Naive thymus-derived CD4-positive, alpha-beta T cell (primary cell): ENCODE measurements at regions of chr4 and their contacts with region 1.

Region 1: DNA sequence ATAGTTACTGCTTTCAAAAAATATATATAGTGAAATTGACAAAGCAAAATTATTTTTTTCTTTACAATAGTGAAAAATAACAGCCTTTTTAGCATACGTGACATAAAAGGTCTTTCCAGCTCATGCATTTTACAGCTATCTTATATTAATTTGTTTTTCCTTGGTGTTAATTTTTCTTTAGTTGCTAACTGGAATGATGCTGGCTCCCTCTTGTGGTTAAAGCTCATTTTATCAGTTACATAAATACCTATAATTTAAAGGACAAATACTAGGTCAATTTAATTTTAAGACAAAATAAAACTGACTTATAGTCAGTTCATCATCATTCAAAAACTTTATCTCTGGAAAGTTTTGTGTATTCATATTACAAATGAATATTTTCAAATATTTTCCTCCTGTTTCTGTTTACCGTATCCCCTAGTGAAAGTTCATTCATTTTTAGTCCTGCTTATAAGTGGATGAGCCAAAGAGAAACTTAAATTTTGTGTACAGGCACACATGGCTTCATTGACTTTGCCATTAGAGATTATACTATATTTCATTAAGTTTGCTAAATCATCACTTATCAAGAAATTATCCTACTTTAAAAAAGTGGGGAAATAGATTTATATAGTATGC is 9.9 kb upstream of the ANAPC4 start:
- DNase-seq: peak in 5 of 9 donors; percentile 18 to 37 (median 26)
- ATAC-seq: no peak
- H3K4me3 ChIP-seq: no peak overlapping the region
- H3K4me3 Mint-ChIP-seq: no peak overlapping the region
- H3K27ac ChIP-seq: no peak overlapping the region
- H3K27ac Mint-ChIP-seq: no peak overlapping the region
- H3K4me1 ChIP-seq: no peaks in the 10 kb centered on the region
- H3K4me1 Mint-ChIP-seq: no peaks in the 10 kb centered on the region
- H3K27me3 ChIP-seq: no peaks in the 10 kb centered on the region
- H3K27me3 Mint-ChIP-seq: no peaks in the 10 kb centered on the region

Region 2: DNA sequence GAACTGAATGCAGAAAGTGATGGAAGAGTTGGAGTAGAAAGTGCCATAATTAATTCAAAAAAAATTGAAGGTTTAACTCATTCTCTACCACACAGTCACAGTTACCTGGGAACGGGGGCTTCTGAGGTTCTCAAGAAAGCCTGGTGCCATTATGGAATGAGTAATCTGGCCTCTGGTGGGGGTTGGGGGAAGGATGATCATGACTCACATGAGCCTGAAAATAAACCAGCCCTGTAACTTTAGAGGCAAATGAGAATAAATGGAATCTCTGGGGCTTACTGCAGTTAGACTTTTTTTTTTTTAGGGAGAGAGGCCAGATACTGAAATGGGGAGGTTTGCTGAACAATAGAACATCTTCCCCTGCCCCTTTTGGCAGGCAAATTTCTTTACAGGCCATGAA is 516.4 kb before region 1 on chr4:
- CTCF ChIA-PET with region 1: no interaction called
- POLR2A ChIA-PET with region 1: no interaction called
- intact Hi-C with region 1: no loop called
- DNase-seq: no peak
- ATAC-seq: no peak
- H3K4me3 ChIP-seq: no peak overlapping the region
- H3K4me3 Mint-ChIP-seq: no peak overlapping the region
- H3K27ac ChIP-seq: no peak overlapping the region
- H3K27ac Mint-ChIP-seq: no peak overlapping the region
- H3K4me1 ChIP-seq: no peaks in the 10 kb centered on the region
- H3K4me1 Mint-ChIP-seq: no peaks in the 10 kb centered on the region
- H3K27me3 ChIP-seq: no peaks in the 10 kb centered on the region
- H3K27me3 Mint-ChIP-seq: peaks cover 0 to 9% (median 4%) of the 10 kb centered on the region in 5 donors

Region 3: DNA sequence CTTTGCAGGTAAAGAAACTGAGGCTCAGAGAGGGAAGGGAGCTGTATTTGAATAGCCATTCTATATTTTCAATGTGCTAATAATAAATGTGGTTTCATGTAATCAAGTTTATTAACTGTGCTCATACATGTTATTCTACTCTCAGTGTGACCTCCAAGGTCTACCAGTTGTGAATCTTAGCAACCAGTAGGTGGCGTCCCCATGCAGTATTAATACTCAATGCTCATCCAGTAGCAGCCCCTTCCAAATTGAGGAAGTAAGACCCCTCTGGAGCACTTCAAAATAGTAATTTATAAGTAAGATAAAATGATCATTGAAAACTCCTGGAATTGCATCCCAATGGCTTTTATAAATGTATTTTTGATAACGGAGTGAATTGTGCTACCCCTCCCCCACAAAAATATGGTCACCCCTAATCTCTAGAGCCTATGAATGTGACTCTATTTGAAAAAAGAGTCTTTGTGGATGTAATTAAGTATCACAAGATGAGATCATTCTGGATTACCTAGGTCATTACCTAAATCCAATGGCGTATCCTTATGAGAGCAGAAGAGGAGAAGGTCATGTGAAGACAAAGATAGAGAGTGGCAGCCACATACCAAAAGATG is 186.5 kb before region 1 on chr4:
- CTCF ChIA-PET with region 1: no interaction called
- POLR2A ChIA-PET with region 1: no interaction called
- intact Hi-C with region 1: loop called (anchors 1 kb)
- DNase-seq: peak in 5 of 9 donors; percentile 14 to 39 (median 26)
- ATAC-seq: peak; percentile 80
- H3K4me3 ChIP-seq: no peak overlapping the region
- H3K4me3 Mint-ChIP-seq: no peak overlapping the region
- H3K27ac ChIP-seq: no peak overlapping the region
- H3K27ac Mint-ChIP-seq: no peak overlapping the region
- H3K4me1 ChIP-seq: peaks cover 4 to 16% of the 10 kb centered on the region in 2 donors
- H3K4me1 Mint-ChIP-seq: peaks cover 22 to 63% (median 47%) of the 10 kb centered on the region in 7 donors
- H3K27me3 ChIP-seq: no peaks in the 10 kb centered on the region
- H3K27me3 Mint-ChIP-seq: no peaks in the 10 kb centered on the region

Region 4: DNA sequence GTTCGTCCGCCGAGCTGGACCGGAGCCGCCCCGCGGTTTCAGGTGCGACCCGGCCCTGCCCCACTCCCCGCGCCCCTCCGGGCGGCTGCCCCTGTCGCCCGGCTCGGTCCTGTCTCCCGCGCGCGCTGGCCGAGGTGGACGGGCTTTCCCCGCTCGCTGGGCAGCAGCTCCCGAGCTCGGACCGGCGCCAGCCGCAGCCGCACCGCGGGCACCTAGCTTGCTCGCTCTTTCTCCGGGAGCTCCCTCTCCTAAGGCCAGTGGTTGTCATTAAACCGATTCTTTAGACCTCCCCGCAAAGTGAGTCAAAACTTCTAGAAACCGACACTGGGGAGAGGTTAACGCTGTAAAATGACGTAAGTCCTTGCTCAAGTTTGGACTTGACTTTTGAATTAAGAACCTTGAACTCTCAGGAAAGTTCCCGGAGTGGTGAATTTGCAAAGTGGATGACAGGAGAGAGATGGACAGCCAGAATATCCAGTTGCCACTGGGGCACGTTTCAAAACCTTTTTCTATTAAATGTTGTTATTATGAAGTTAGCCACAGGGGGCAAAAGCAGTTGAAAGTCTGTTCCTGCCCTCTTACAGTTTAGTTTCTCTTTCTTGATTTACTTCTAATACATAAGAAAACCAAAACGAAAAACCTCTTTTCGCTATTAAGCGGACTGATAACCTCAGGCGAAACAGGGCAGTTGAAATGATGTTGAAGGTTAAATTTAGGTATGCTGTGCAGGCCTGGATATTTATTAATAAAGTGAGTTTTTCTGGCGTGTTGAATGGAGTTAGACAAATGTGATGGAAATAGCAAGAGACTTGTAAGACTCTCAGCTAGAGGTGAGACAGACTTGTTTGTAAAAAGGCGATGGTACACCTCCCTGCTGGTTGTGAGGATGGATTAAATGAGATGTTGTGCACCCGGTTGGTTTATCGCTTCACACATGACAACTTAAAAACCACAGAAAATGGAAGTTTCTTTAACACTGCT is 132.4 kb before region 1 on chr4:
- CTCF ChIA-PET with region 1: no interaction called
- POLR2A ChIA-PET with region 1: no interaction called
- intact Hi-C with region 1: no loop called
- DNase-seq: peak; percentile 20 to 76 (median 64)
- ATAC-seq: peak; percentile 70
- H3K4me3 ChIP-seq: peak overlapping the region; percentile 80
- H3K4me3 Mint-ChIP-seq: peak overlapping the region; percentile 86 to 99 (median 94)
- H3K27ac ChIP-seq: peak overlapping the region; percentile 89
- H3K27ac Mint-ChIP-seq: peak overlapping the region; percentile 89 to 98 (median 95)
- H3K4me1 ChIP-seq: peaks cover 16 to 29% of the 10 kb centered on the region in 2 donors
- H3K4me1 Mint-ChIP-seq: peaks cover 16 to 57% (median 44%) of the 10 kb centered on the region in 7 donors
- H3K27me3 ChIP-seq: no peaks in the 10 kb centered on the region
- H3K27me3 Mint-ChIP-seq: no peaks in the 10 kb centered on the region

Region 5: GRCh38 chr4:25330905-25331808 is 36.0 kb before region 1 on chr4:
- CTCF ChIA-PET with region 1: no interaction called
- POLR2A ChIA-PET with region 1: no interaction called
- intact Hi-C with region 1: loop called in 1 of 2 experiments (anchors 5 kb)
- DNase-seq: no peak
- ATAC-seq: peak; percentile 54
- H3K4me3 ChIP-seq: peak overlapping the region; percentile 57
- H3K4me3 Mint-ChIP-seq: peak overlapping the region; percentile 59 to 86 (median 76)
- H3K27ac ChIP-seq: peak overlapping the region; percentile 42
- H3K27ac Mint-ChIP-seq: peak overlapping the region; percentile 70 to 95 (median 85)
- H3K4me1 ChIP-seq: peaks cover 0 to 7% of the 10 kb centered on the region in 2 donors
- H3K4me1 Mint-ChIP-seq: peaks cover 7 to 31% (median 23%) of the 10 kb centered on the region in 7 donors
- H3K27me3 ChIP-seq: no peaks in the 10 kb centered on the region
- H3K27me3 Mint-ChIP-seq: no peaks in the 10 kb centered on the region

Region 6: DNA sequence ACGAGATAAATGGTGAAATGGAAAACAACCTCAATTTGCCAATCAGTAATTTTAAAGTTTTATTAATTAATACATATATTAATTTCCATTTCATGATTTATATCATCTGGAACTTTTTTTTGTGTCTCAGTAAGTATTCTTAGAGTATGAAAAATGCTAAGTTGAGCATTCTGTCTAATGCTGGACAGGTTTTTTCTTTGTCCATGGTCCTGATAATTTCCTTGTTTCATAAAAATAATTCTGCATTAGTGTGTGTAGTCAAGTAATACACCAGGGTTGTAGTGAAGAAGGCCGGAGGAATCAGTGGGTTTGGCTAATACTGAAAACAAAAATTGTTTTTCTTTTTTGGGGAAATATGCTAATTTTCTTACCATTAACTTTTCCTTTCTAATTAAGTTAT is 19.8 kb after region 1 on chr4:
- CTCF ChIA-PET with region 1: no interaction called
- POLR2A ChIA-PET with region 1: no interaction called
- intact Hi-C with region 1: loop called in 1 of 2 experiments (anchors 1 kb)
- DNase-seq: no peak
- ATAC-seq: no peak
- H3K4me3 ChIP-seq: no peak overlapping the region
- H3K4me3 Mint-ChIP-seq: no peak overlapping the region
- H3K27ac ChIP-seq: no peak overlapping the region
- H3K27ac Mint-ChIP-seq: no peak overlapping the region
- H3K4me1 ChIP-seq: no peaks in the 10 kb centered on the region
- H3K4me1 Mint-ChIP-seq: peaks cover 0 to 12% (median 0%) of the 10 kb centered on the region in 7 donors
- H3K27me3 ChIP-seq: no peaks in the 10 kb centered on the region
- H3K27me3 Mint-ChIP-seq: no peaks in the 10 kb centered on the region

Region 7: DNA sequence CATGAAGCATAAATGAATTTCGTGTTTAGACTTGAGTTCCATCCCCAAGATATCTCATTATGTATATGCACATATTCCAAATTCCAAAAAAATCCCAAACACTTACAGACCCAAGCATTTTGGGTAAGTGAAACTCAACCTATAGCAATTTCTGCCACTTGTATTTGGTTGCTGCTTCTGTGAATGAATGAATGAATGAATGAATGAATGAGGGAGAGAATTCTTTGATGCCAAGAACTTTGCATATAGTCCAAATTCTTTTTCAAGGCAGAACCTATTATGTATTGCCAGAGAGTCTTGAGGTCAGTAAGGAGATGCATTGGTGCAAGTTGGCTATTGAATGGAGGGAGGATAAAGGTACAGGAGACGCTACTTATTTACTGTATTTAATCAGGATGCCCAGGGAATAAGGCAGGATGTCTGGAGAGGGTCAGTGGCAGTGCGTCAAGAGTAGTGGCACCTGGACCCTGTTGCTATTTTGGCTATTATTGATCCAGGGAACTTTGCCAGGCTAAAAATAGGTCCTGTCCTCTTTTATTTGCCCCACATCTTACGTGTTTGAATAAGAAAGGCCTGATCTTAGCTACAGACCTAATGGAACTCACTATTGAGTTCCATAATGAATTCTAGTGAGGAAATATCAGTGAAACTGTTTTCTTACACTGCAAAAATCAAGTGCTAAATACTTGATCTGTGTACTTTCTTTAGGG is 43.9 kb after region 1 on chr4:
- CTCF ChIA-PET with region 1: no interaction called
- POLR2A ChIA-PET with region 1: no interaction called
- intact Hi-C with region 1: no loop called
- DNase-seq: no peak
- ATAC-seq: no peak
- H3K4me3 ChIP-seq: no peak overlapping the region
- H3K4me3 Mint-ChIP-seq: no peak overlapping the region
- H3K27ac ChIP-seq: no peak overlapping the region
- H3K27ac Mint-ChIP-seq: peak overlapping the region in 2 of 9 donors; percentile 15 to 38
- H3K4me1 ChIP-seq: no peaks in the 10 kb centered on the region
- H3K4me1 Mint-ChIP-seq: peaks cover 0 to 2% (median 0%) of the 10 kb centered on the region in 7 donors
- H3K27me3 ChIP-seq: no peaks in the 10 kb centered on the region
- H3K27me3 Mint-ChIP-seq: no peaks in the 10 kb centered on the region

Region 8: GRCh38 chr4:25535278-25535677 is 168.2 kb after region 1 on chr4:
- CTCF ChIA-PET with region 1: no interaction called
- POLR2A ChIA-PET with region 1: no interaction called
- intact Hi-C with region 1: no loop called
- DNase-seq: no peak
- ATAC-seq: no peak
- H3K4me3 ChIP-seq: no peak overlapping the region
- H3K4me3 Mint-ChIP-seq: no peak overlapping the region
- H3K27ac ChIP-seq: no peak overlapping the region
- H3K27ac Mint-ChIP-seq: peak overlapping the region in 1 of 9 donors; percentile 13
- H3K4me1 ChIP-seq: no peaks in the 10 kb centered on the region
- H3K4me1 Mint-ChIP-seq: peaks cover 0 to 2% (median 0%) of the 10 kb centered on the region in 7 donors
- H3K27me3 ChIP-seq: no peaks in the 10 kb centered on the region
- H3K27me3 Mint-ChIP-seq: peaks cover 2 to 25% (median 15%) of the 10 kb centered on the region in 5 donors